Stomach (tissue), 19 donors: ENCODE measurements at regions of chr4 and their contacts with region 1.

Region 1: DNA sequence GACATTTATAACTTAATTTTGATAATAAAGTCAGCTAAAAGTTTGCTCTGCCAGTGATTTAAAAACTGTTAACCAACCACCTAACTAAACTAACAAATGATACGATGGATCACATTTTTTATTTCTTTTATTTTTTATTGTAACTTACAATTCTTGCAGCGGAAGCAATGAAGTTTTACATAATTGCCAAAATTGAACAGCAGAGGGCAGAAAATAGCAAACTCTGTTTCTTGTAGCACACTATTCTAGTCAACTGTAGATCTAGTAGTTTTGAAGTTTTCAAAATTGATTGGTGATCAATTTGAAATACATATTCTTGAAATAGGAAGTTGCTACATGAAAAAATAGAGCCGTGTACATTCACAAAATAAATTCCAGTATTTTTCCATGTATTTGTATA is 2.8 kb upstream of the GRIA2 start:
- DNase-seq: peak in 1 of 2 donors; percentile 50
- H3K4me3 ChIP-seq: no peak overlapping the region
- H3K27ac ChIP-seq: no peak overlapping the region
- H3K4me1 ChIP-seq: peaks cover 7 to 29% (median 27%) of the 10 kb centered on the region in 4 donors
- H3K27me3 ChIP-seq: peaks cover 0 to 38% (median 35%) of the 10 kb centered on the region in 3 donors
- CTCF ChIP-seq: peak in 4 of 7 experiments; percentile 27 to 53 (median 30)
- EP300 ChIP-seq: no peak
- POLR2A ChIP-seq: no peak

Region 2: DNA sequence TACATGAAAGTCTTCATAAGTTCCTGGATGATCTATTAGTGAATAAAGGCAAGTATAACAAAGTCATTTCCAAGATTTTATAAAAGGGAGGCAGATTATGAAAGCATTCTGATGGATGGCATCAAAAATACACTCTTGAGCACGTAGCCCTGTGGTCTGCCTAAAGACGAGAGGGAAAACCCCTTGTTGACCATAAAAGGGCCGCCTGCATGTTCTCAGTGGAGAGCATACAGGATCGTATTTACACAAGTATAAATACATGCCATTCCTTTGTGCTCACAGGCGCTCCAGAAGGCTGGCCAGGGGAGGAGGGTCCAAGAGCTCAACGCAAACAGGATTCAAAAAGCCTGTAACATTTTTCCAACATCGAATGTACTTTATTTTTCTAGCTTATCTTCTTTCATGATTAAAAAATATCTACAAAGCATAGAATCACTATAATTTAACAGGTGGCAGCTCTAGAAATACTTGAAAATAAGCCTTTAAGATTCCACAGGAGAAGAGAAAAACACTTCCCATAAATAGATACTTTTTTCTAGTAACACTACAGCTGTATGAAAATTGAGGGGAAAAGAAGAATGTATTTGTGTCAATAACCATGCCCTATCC is 275.7 kb before region 1 on chr4:
- intact Hi-C with region 1: no loop called
- DNase-seq: peak; percentile 79 to 93
- H3K4me3 ChIP-seq: no peak overlapping the region
- H3K27ac ChIP-seq: peak overlapping the region; percentile 30 to 77 (median 44)
- H3K4me1 ChIP-seq: peaks cover 5 to 62% (median 31%) of the 10 kb centered on the region in 4 donors
- H3K27me3 ChIP-seq: no peaks in the 10 kb centered on the region
- CTCF ChIP-seq: no peak
- EP300 ChIP-seq: no peak
- POLR2A ChIP-seq: no peak

Region 3: DNA sequence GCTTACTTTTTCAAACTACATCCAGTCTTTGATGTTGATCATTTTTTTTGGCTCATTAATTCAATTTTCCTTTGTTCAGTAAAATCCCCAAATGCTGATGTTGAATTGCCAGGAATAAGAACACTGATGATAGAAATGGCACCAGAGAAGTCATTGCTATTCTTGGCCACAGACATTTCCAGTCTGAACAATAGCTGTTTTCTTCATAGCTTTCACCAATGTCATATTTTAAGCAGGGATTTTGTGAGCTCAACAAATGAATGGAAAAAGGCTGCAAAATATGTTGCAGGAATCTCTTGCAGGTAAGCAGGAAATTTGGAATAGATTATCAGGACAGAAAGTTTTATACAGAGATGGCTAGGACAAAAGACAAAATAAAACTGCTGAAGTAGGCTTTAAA is 182.2 kb before region 1 on chr4:
- intact Hi-C with region 1: no loop called
- DNase-seq: peak in 1 of 2 donors; percentile 9
- H3K4me3 ChIP-seq: no peak overlapping the region
- H3K27ac ChIP-seq: no peak overlapping the region
- H3K4me1 ChIP-seq: no peaks in the 10 kb centered on the region
- H3K27me3 ChIP-seq: no peaks in the 10 kb centered on the region
- CTCF ChIP-seq: no peak
- EP300 ChIP-seq: no peak
- POLR2A ChIP-seq: no peak

Region 4: GRCh38 chr4:157372567-157372966 is 154.9 kb after region 1 on chr4:
- intact Hi-C with region 1: no loop called
- DNase-seq: no peak
- H3K4me3 ChIP-seq: no peak overlapping the region
- H3K27ac ChIP-seq: no peak overlapping the region
- H3K4me1 ChIP-seq: no peaks in the 10 kb centered on the region
- H3K27me3 ChIP-seq: no peaks in the 10 kb centered on the region
- CTCF ChIP-seq: no peak
- EP300 ChIP-seq: no peak
- POLR2A ChIP-seq: no peak

Region 5: GRCh38 chr4:157983300-157983699 is 765.6 kb after region 1 on chr4:
- intact Hi-C with region 1: loop called (anchors 10 kb)
- DNase-seq: no peak
- H3K4me3 ChIP-seq: no peak overlapping the region
- H3K27ac ChIP-seq: no peak overlapping the region
- H3K4me1 ChIP-seq: peaks cover 0 to 7% (median 3%) of the 10 kb centered on the region in 4 donors
- H3K27me3 ChIP-seq: no peaks in the 10 kb centered on the region
- CTCF ChIP-seq: no peak
- EP300 ChIP-seq: no peak
- POLR2A ChIP-seq: no peak